Posterior cingulate gyrus (tissue), 11 donors: ENCODE measurements at regions of chr6 and their contacts with region 1.

Region 1: GRCh38 chr6:10146723-10147451 is 268.0 kb downstream of the TFAP2A start:
- DNase-seq: peak in 5 of 10 donors; percentile 23 to 82 (median 33)

Region 2: GRCh38 chr6:10082385-10082784 is 64.5 kb before region 1 on chr6:
- intact Hi-C with region 1: no loop called
- DNase-seq: no peak

Region 3: DNA sequence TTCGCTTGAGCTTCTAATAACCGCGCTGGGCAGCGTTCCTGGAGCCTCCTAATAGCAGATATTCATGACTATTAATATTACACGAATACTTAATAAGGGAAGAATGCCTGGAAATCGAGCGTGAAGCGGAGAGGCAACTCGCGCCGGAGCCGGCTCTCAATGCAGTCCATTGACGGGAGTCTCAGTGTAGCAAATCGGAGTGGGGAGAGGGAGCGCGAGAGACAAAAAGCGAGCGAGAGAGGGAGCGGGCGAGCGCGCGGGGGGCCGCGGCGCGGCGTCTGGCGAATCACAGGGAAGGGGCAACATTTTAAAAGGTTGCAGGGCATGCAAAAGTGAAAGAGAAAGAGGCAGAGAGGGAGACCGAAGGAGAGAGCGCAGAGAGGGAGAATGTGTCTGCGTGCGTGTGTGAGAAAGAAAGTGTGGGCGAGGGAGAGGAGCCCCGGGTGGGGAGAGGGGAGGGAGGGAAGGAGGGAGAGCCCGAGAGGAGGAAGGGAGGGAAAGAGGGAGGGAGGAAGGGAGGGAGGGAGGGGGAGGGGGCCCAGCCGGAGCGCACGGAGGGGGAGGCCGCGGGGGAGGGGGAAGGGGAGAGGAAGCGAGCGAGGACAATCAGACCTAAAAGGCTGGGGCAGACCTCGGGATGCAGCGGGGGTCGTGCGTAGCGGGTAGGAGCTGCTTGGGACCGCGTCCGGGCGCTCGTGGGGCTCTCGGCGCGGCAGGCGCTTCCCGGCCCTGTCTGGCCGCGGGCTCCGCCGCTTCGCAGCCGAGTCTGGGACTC is 265.3 kb after region 1 on chr6:
- intact Hi-C with region 1: loop called (anchors 5 kb)
- DNase-seq: peak in 1 of 10 donors; percentile 83

Region 4: DNA sequence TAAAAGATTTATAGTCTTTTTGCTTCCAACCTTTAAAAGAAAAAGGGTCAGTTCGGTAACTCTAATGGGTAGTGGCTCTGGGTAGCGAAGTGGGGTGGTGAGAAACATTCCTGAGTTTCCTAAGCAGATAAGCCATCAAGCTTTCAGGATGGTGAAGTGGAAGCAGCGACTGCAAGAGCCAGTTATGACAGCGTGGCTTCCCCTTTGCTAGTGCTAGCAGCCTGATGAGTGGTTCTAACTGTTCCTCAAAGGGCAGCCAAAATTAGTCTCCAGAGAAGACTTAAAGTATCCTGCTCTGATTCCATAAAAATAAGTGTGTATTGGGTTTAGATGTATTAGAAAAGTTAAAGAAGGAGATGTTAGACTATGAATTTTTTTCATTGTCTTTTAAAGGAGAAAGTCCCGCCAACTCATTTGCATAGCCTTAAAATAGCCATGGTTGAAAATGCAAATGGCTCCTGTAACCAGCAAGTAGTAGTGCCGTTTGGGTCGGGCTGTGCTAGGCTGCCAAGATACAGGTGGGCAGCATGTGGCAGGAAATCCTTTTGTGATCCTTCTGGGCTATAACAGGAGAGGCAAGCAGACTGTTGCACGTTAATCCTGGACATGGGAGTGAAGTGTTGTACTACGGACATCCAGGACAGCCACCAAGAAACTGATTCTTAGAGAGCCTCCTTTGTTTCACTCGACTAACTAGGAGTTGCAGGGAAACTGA is 879.2 kb after region 1 on chr6:
- intact Hi-C with region 1: no loop called
- DNase-seq: no peak